ENCODE measurements at regions of chrX and their contacts with region 1.

Region 1: DNA sequence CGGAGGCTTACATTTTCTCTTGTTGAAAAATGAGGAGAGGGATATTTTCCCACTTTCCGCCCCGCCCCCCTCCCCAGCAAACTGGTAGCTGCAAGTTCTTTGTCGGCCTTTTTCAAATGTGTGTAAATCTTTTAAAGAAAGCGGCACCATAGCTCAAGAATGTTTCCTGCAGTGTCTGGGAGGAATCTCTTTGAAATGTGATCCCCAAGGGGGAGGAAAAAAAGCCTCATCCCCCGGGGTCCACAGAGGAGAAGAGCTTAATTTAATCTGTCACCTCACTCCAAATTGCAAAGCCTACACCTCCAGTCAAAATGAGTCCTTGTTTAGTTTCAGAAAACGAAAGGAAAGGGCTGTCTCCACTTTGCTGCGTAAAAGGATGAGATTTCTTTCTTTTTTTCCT is 34.8 kb downstream of the ASMT start:
- DNase-seq: no peak
- ATAC-seq: no peak
- H3K4me3 Mint-ChIP-seq: no peak overlapping the region
- H3K27ac Mint-ChIP-seq: no peak overlapping the region
- H3K4me1 Mint-ChIP-seq: no peaks in the 10 kb centered on the region
- H3K27me3 Mint-ChIP-seq: no peaks in the 10 kb centered on the region

Region 2: DNA sequence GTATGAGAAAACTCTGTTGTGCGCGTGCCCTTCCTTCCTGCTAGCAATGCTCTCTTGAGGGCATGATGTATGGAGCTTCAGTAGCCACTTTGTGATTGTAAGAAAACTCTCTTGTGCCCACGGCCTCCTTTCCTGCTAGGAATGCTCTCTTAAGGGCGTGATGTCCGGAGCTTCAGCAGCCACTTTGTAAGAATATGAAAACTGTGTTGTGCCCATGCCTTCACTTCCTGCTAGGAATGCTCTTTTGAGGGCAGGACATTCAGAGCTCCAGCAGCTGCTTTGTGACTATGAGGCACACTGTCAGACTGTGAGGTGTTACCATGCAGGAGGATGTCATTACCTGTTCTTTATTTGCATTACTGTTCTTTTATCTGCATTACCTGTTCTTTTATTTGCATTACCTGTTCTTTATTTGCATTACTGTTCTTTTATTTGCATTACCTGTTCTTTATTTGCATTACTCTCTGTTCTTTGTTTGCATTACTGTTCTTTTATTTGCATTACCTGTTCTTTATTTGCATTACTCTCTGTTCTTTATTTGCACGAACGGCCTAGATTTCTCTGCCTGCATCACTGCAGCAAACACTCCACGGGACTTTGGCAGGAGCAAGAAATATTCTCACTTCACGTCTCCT is 603.8 kb before region 1 on chrX:
- CTCF ChIA-PET with region 1: no interaction called
- POLR2A ChIA-PET with region 1: no interaction called
- intact Hi-C with region 1: no loop called
- DNase-seq: no peak
- ATAC-seq: no peak
- H3K4me3 Mint-ChIP-seq: no peak overlapping the region
- H3K27ac Mint-ChIP-seq: no peak overlapping the region
- H3K4me1 Mint-ChIP-seq: no peaks in the 10 kb centered on the region
- H3K27me3 Mint-ChIP-seq: no peaks in the 10 kb centered on the region

Region 3: DNA sequence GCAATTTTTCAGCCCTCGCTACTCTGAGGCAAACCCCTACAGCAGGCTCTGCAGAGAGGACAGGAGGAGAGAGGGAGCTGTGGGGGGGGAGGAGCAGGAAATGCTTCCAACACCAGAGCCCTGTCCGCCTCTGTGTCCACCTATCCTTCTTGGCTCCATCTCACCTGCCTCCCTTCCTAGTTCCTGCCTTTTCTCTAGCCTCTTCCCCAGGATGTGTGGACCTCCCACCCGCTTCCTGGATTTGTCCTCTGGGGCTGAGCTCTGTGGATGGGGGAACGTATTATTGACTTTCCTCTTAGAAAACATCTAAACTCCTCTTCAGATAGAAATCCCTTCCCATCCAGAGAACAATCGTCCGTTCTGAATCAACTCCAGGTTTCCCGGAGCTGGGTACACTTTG is 20.4 kb before region 1 on chrX:
- CTCF ChIA-PET with region 1: no interaction called
- POLR2A ChIA-PET with region 1: no interaction called
- intact Hi-C with region 1: loop called in 1 of 2 experiments (anchors 2 kb)
- DNase-seq: no peak
- ATAC-seq: no peak
- H3K4me3 Mint-ChIP-seq: no peak overlapping the region
- H3K27ac Mint-ChIP-seq: no peak overlapping the region
- H3K4me1 Mint-ChIP-seq: peaks cover 5% of the 10 kb centered on the region
- H3K27me3 Mint-ChIP-seq: no peaks in the 10 kb centered on the region

Region 4: GRCh38 chrX:1727531-1728027 is 78.0 kb after region 1 on chrX:
- CTCF ChIA-PET with region 1: no interaction called
- POLR2A ChIA-PET with region 1: no interaction called
- intact Hi-C with region 1: no loop called
- DNase-seq: no peak
- ATAC-seq: no peak
- H3K4me3 Mint-ChIP-seq: no peak overlapping the region
- H3K27ac Mint-ChIP-seq: no peak overlapping the region
- H3K4me1 Mint-ChIP-seq: no peaks in the 10 kb centered on the region
- H3K27me3 Mint-ChIP-seq: no peaks in the 10 kb centered on the region

Region 5: DNA sequence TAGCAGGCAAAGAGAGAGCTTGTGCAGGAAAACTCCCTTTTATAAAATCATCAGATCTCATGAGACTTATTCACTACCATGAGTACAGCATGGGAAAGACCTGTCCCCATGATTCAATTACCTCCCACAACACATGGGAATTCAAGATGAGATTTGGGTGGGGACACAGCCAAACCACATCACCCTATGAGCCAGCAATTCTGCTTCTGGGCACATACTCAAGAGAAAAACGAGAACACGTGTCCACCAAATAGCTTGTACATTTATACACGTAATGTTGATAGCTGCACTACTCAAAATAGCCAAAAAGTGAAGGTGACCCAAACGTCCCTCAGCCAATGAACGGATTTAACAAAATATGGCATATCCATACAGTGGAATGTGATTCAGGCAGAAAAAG is 945.6 kb after region 1 on chrX:
- CTCF ChIA-PET with region 1: no interaction called
- POLR2A ChIA-PET with region 1: no interaction called
- intact Hi-C with region 1: loop called (anchors 1 kb)
- DNase-seq: no peak
- ATAC-seq: no peak
- H3K4me3 Mint-ChIP-seq: no peak overlapping the region
- H3K27ac Mint-ChIP-seq: no peak overlapping the region
- H3K4me1 Mint-ChIP-seq: no peaks in the 10 kb centered on the region
- H3K27me3 Mint-ChIP-seq: no peaks in the 10 kb centered on the region

Region 6: DNA sequence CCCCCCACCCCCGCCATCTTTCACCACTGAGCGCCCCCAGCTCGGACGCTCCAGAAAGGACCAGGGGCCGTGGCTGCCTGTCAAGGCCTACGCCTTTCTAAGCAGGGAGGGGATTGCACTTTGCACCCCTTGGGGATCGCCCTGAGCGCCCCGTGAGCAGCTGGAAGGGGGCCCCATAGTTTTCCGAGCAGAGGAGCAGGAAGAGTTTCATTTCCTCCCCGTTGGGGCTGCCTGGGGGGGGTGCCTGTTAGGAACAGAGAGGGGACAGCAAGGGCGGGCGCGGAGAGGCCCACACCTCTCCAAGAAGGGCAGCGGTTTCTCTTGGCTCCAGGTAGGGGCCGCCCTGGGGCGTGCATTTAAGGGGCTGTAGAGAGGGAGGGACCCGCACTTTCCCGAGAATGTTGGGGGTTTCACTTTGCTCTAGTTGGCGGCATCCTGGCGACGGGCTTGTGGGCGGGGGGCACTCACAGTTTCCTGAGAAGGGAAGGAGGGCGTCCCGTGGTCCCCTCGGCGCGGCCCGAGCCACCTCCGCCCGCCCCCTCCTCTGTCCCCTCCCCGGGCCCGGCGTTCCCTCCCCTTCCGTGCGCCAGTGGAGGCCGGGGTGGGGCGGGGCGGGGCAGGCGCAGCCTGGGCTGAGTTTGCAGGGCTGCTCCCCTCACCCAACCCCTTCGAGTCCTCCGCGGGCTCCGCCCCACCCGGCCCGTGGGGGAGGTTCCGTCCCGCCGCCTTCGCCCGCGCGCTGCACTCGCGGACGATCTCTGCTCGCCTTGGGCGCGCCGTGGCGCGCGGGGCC is 959.2 kb after region 1 on chrX:
- CTCF ChIA-PET with region 1: no interaction called
- POLR2A ChIA-PET with region 1: no interaction called
- intact Hi-C with region 1: loop called in 1 of 2 experiments (anchors 1 kb)
- DNase-seq: peak; percentile 93
- ATAC-seq: peak; percentile 94
- H3K4me3 Mint-ChIP-seq: peak overlapping the region; percentile 83
- H3K27ac Mint-ChIP-seq: peak overlapping the region; percentile 82
- H3K4me1 Mint-ChIP-seq: peaks cover 47% of the 10 kb centered on the region
- H3K27me3 Mint-ChIP-seq: no peaks in the 10 kb centered on the region

Measured in activated CD4-positive, alpha-beta T cell treated with anti-CD3 and anti-CD28 coated beads for 36 hours (primary cell).